ENCODE measurements at regions of chr3 and their contacts with region 1.

Region 1: GRCh38 chr3:46848271-46849044 is 14.8 kb downstream of the MYL3 start:
- DNase-seq: peak; percentile 27
- H3K4me3 ChIP-seq: no peak overlapping the region
- H3K27me3 ChIP-seq: peaks cover 2% of the 10 kb centered on the region; the same call in 1 of the 2 replicates
- CTCF ChIP-seq: peak; percentile 61

Region 2: GRCh38 chr3:46717447-46718231 is 130.8 kb before region 1 on chr3 and contains the start of gene PRSS50:
- CTCF ChIA-PET with region 1: no interaction called
- POLR2A ChIA-PET with region 1: no interaction called
- DNase-seq: no peak
- H3K4me3 ChIP-seq: no peak within 1 kb of the TSS
- H3K27me3 ChIP-seq: peaks cover 3% of the 10 kb centered on the region
- CTCF ChIP-seq: peak; percentile 33
- polyA plus RNA-seq, gene PRSS50: not detected in 2 replicates

Region 3: GRCh38 chr3:46860017-46860830 is 11.8 kb after region 1 on chr3:
- CTCF ChIA-PET with region 1: interaction called, 18 read pairs
- POLR2A ChIA-PET with region 1: no interaction called
- DNase-seq: no peak
- H3K4me3 ChIP-seq: no peak overlapping the region
- H3K27me3 ChIP-seq: peaks cover 6% of the 10 kb centered on the region
- CTCF ChIP-seq: peak; percentile 49